Sciatic nerve (tissue), 2 donors: ENCODE measurements at regions of chr15 and their contacts with region 1.

Region 1: GRCh38 chr15:101499863-101500713 is 10.6 kb upstream of the PCSK6 start:
- DNase-seq: peak; percentile 42
- ATAC-seq: no peak

Region 2: DNA sequence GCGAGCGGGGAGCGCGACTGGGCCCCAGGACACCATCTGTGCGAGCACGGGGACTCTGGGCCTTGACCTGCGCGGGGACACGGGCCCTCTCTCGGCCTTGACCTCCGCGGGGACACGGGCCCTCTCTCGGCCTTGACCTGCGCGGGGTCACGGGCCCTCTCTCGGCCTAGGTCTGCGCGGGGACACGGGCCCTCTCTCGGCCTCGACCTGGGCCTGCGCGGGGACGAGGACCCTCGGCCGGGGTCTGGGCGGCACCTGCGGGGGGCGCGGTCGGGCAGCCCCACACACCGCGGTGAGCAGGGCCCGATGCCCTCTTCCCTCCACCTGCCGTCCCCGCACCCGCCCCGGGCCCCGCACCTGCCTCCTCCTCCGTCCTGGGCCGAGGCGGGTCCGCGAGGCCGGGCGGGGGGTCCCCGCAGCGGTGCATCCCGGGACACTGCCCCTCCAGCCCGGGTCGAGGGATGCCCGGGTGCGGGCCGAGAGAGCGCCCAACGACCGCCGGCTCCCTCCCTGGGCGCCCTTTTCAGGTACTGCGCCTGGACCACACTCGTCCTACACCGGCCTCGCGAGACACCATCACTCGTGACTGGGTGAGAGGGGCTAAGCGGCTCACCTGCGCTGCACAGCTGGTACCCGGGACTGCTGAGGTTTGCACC is 955.7 kb before region 1 on chr15:
- intact Hi-C with region 1: no loop called
- DNase-seq: no peak
- ATAC-seq: no peak

Region 3: DNA sequence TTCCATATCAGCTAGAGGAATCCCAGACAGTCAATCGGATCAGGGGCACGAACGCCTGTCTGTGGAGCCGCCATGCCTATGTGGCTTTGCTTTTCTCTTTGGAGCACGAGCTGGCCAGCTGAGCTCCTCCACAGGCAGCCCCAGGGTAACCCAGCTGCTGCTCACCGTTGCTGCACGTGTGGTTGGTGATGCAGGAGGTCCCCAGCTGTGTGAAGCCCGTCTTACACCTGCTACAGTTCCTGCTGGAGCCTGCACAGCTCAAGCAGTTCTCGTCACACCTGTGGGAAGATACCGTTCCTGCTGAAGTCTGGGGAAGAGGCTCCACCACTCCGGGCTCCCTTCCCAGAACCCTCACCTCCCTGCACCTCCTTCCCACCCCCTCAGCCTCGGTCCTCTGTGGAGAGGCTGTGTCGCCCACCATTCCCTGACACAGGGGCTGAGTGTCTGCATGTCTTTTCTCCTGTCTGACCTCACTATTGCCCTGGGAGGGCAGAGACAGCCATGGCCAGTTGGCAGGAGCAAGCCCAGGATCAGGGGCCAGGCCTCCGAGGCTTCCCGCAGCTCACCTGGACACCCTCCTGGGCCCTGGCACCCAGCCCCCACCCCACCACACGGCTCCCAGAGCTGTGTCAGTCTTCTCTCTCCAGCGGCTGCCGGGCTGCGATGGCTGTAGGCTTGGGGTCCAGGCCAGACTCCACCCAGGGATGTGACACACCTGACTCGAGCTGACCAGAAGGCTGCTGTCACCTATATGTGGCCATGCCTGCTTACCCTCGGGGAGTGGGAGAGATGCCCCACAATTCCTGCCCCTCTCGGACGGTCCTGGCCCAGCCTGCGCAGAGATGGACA is 192.8 kb before region 1 on chr15:
- intact Hi-C with region 1: loop called (anchors 10 kb)
- DNase-seq: peak; percentile 48
- ATAC-seq: no peak

Region 4: DNA sequence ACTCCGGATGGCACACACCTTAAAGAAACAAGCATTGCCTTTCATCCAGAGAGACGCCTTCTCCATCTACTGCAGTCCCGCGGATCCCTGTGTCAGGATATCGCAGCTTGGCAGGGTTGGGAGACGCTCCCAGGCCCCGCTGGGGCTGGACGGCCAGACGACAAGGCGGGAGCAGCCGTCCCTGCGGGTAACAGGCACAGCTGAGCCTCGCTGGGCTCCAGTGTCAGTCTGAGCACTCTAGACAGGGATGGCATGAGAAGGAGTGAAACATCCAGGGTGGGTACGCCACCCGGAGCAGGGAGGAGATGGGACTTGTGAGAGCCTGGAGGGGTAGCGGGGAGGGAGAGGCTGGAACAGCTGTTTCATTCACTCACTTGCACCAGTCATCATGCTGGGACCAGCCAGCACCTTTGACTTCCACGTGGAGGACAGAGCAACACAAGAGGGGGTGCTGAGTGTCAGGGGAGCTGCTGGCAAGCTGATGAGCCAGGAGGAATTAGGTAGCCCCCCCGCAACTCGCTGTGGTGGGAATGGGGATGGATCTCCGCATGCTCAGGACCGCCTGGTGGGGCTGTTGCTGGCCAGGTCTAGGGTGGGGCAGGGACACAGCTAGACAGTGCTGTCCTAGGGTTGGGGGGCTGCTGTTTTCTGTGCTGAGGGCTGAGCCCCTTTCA is 173.5 kb before region 1 on chr15:
- intact Hi-C with region 1: no loop called
- DNase-seq: peak; percentile 37
- ATAC-seq: no peak

Region 5: GRCh38 chr15:101372149-101372577 is 127.9 kb before region 1 on chr15:
- intact Hi-C with region 1: loop called (anchors 10 kb)
- DNase-seq: no peak
- ATAC-seq: peak; percentile 69